Activated T-helper 1 cell treated with anti-CD3 and anti-CD28 coated beads, Interleukin-12 subunit alpha, Interleukin-12 subunit beta, Interleukin-2, Interleukin-4 antibody, amounts not matched to agents 30 ng/mL and 10 ng/mL and 1 ng/mL, durations not matched to agents 14 hours and 24 hours and 36 hours (primary cell): ENCODE measurements at regions of chr9 and their contacts with region 1.

Region 1: GRCh38 chr9:128322404-128323211 is at the starts of genes COQ4 and TRUB2:
- DNase-seq: peak; percentile 91
- H3K4me3 Mint-ChIP-seq: peak within 1 kb of the TSS; percentile 98
- H3K27ac Mint-ChIP-seq: peak within 1 kb of the TSS; percentile 100
- H3K4me1 Mint-ChIP-seq: peaks cover 12% of the 10 kb centered on the region
- H3K27me3 Mint-ChIP-seq: peaks cover 2% of the 10 kb centered on the region
- total RNA-seq, gene COQ4: 59.0 and 59.5 TPM in 2 replicates
- total RNA-seq, gene TRUB2: 41.8 and 44.0 TPM in 2 replicates

Region 2: DNA sequence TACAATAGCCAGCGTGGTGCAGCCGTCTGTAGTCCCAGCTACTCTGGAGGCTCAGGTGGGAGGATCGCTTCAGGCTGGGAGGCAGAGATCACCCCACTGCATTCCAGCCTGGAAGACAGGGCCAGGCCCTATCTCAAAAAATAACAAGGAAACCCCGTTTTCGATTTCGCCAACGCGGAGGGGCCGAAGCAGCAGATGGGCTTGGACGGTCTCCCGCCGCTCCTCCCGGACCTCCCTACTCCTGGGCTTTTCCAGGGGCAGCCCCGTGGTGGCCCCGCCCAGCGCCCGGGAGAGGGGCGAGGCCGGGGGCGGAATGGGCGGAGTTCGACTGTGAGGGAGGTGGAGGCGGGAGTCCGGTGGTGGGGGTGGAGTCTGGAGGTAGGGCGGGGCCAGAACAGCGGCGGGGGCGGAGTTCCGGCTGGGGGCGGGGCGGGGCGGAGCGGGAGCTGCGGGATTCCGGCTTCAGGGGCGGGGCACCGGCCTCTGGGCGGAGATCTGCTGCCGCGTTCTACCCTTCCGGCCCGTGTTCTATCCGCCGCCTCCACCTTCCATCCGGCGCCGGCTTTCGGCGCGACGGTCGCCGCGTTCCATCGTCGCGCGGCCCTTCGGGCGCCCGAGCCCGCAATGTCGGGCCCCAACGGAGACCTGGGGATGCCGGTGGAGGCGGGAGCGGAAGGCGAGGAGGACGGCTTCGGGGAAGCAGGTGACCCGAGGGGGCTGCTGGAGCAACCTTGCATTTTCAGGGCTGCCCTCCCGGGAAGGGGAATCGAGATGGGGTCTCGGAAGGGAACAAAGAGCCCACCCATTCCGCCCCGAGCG is 162.6 kb before region 1 on chr9 and contains the start of gene BBLN:
- intact Hi-C with region 1: loop called (anchors 1 kb)
- DNase-seq: peak; percentile 88
- H3K4me3 Mint-ChIP-seq: peak within 1 kb of the TSS; percentile 84
- H3K27ac Mint-ChIP-seq: peak within 1 kb of the TSS; percentile 93
- H3K4me1 Mint-ChIP-seq: peaks cover 14% of the 10 kb centered on the region
- H3K27me3 Mint-ChIP-seq: peaks cover 2% of the 10 kb centered on the region
- total RNA-seq, gene BBLN: 97.3 and 106 TPM in 2 replicates

Region 3: DNA sequence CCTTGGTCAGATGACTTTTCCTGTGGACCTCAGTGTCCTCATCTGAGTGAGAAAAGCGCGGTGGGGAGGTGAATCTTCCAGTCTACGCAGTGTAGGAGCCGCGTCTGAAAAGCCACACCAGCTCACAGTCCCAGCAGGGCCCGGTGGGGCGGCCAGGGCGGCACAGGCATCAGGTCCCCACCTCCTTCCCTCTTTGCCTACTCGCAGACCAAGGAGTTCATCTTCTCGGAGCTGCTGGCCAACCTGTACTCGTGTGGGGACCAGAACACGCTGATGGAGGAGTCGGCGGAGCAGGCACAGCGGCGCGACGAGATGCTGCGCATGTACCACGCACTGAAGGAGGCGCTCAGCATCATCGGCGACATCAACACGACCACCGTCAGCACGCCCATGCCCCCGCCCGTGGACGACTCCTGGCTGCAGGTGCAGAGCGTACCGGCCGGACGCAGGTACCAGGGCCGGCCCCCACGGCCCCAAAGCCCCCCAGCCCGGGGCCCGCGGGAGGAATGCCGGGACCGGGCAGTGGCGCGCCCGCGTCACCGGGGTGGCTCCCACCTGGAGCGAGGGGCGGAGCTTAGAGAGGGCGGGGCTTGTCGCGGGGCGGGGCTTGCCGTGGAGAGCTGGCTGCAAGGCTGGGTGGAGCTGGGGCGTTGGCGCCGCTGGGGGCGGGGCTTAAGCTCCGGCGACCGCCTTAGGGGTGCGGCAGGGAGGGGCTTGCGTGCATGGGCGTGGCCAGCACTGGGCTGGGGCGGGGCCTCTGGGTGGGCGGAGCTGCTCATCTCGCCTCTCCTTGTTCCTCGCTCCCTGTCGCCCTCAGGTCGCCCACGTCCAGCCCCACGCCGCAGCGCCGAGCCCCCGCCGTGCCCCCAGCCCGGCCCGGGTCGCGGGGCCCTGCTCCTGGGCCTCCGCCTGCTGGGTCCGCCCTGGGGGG is 72.4 kb before region 1 on chr9:
- intact Hi-C with region 1: loop called (anchors 1 kb)
- DNase-seq: peak; percentile 94
- H3K4me3 Mint-ChIP-seq: peak overlapping the region; percentile 78
- H3K27ac Mint-ChIP-seq: no peak overlapping the region
- H3K4me1 Mint-ChIP-seq: peaks cover 5% of the 10 kb centered on the region
- H3K27me3 Mint-ChIP-seq: peaks cover 28% of the 10 kb centered on the region

Region 4: DNA sequence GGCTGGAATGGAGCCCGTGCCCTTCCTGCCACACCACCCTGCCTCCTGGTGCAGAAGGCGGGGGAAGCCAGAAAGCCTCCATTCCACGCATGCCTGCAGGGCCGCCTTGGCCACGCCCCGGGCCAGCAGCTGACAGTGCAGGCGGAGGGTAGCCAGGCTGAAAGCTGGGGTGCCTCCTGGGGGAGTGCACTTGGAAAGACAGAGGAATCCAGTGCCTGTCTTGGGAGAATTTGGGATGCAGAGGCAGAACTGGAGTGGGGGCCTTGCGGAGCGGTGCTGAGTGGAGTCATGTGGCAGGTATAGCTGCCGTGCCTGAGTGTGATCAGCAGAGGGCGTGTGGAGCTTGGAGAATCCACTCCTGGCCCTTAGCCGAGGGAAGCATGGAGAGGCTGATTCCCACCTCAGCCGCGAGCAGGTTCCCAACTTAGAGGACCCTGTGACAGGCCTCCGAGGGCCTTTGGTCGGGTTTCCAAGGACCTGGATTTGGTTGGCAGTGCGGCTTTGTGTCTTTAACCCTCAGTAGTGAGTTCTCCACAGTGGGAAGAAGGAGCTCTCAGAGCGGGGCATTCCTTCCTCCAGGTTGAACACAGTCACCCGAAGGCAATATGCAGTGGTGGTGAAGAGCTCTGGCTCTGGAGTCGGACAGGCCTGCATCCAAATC is 39.5 kb after region 1 on chr9:
- intact Hi-C with region 1: loop called (anchors 2 kb)
- DNase-seq: peak; percentile 52
- H3K4me3 Mint-ChIP-seq: peak overlapping the region; percentile 79
- H3K27ac Mint-ChIP-seq: peak overlapping the region; percentile 23
- H3K4me1 Mint-ChIP-seq: peaks cover 18% of the 10 kb centered on the region
- H3K27me3 Mint-ChIP-seq: no peaks in the 10 kb centered on the region

Region 5: DNA sequence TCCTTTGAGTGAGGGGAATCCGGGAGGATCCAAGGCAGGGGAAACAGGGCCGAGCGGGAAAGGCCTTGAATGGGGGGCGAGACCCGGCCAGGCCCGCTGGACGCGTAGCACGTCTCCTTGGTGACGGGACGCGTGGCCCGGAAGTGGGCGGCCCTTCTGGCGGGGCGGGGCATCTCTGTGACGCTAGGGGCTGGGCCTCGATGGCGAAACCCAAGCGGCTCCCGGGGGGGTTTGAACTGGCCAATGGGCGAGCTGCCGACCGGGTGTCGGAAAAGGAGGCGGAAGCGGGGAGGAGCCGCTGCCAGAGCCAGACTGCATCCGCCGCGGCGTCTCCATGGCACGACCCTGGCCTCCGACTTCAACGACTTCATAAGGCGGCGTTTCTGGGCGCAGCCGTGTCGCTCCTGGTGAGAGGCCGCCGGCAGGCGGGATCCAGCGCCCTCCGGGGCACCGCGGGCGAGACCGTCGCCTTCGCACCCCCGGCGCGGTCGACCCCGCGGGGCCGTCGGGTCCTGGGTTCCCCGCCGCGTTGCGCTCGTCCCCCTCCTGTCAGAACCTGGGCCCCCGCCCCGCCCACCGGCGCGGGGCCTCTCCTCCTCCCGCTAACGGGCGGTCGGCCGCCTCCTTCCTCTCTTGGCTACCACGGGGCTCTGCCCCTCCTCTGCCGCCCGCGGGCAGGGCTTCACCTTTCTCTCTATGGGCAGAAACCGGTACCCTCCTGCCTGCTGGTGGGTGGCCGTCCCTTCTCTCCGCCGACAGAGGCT is 133.4 kb after region 1 on chr9 and contains the start of gene ODF2:
- intact Hi-C with region 1: loop called (anchors 1 kb)
- DNase-seq: peak; percentile 98
- H3K4me3 Mint-ChIP-seq: peak within 1 kb of the TSS; percentile 93
- H3K27ac Mint-ChIP-seq: peak within 1 kb of the TSS; percentile 98
- H3K4me1 Mint-ChIP-seq: peaks cover 13% of the 10 kb centered on the region
- H3K27me3 Mint-ChIP-seq: peaks cover 3% of the 10 kb centered on the region
- total RNA-seq, gene ODF2: 55.6 and 57.6 TPM in 2 replicates

Region 6: DNA sequence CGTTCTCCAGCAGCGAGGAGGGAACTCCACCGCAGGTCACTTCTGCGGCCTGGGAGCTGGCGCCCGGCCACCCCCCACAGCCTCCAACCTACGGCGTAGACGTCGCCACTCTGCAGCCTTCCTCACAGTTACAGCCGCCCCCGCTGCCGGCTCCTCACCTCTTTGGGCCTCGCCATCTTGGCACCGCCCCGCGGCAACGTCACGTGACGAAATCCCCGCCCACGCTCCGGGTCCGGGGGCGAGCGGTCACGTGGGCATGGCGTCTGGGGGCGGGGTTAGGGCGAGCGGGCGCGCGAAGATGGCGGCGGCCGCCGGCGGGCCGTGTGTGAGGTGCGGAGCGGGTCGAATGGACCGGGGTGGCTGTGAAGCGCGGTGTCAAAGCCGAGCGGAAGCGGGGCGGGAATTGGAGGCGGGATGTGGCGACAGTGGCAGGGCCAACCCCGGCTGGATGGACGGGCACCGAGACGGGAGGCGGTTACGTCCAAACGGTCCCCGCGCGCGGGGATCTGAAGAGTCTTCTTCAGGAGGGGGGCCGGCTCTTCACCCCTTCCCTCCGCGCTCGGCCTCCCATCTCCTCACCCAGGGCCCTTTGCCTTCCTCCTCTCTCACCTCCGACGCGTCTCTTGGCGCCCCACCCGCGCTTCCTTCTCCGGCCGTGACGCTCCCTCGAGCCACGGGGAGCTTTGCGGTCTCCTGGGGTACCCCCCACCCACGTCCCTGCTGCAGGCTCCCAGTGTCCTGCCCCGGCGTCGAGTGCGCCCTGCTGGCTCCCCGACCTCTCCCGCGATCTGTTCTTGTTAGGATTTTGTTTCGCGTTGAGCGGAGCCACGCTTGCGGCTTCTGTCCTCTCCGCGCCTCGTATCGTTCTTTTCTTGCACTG is 625.1 kb after region 1 on chr9 and contains the starts of genes DOLK and NUP188:
- intact Hi-C with region 1: loop called (anchors 1 kb)
- DNase-seq: peak; percentile 99
- H3K4me3 Mint-ChIP-seq: peak within 1 kb of the TSS; percentile 98
- H3K27ac Mint-ChIP-seq: peak within 1 kb of the TSS; percentile 99
- H3K4me1 Mint-ChIP-seq: peaks cover 37% of the 10 kb centered on the region
- H3K27me3 Mint-ChIP-seq: no peaks in the 10 kb centered on the region
- total RNA-seq, gene DOLK: 17.7 and 18.1 TPM in 2 replicates
- total RNA-seq, gene NUP188: 154 and 158 TPM in 2 replicates